Gastrocnemius medialis (tissue), 4 donors: ENCODE measurements at regions of chr22 and their contacts with region 1.

Region 1: GRCh38 chr22:24244101-24244787 is 638 bp downstream of the GGT5 start:
- DNase-seq: no peak
- ATAC-seq: no peak
- H3K4me3 ChIP-seq: peak overlapping the region; percentile 43 to 53 (median 50)
- H3K27ac ChIP-seq: peak overlapping the region; percentile 72 to 82 (median 74)
- H3K4me1 ChIP-seq: peaks cover 14 to 20% of the 10 kb centered on the region in 2 donors
- H3K27me3 ChIP-seq: no peaks in the 10 kb centered on the region
- CTCF ChIP-seq: no peak
- POLR2A ChIP-seq: no peak

Region 2: DNA sequence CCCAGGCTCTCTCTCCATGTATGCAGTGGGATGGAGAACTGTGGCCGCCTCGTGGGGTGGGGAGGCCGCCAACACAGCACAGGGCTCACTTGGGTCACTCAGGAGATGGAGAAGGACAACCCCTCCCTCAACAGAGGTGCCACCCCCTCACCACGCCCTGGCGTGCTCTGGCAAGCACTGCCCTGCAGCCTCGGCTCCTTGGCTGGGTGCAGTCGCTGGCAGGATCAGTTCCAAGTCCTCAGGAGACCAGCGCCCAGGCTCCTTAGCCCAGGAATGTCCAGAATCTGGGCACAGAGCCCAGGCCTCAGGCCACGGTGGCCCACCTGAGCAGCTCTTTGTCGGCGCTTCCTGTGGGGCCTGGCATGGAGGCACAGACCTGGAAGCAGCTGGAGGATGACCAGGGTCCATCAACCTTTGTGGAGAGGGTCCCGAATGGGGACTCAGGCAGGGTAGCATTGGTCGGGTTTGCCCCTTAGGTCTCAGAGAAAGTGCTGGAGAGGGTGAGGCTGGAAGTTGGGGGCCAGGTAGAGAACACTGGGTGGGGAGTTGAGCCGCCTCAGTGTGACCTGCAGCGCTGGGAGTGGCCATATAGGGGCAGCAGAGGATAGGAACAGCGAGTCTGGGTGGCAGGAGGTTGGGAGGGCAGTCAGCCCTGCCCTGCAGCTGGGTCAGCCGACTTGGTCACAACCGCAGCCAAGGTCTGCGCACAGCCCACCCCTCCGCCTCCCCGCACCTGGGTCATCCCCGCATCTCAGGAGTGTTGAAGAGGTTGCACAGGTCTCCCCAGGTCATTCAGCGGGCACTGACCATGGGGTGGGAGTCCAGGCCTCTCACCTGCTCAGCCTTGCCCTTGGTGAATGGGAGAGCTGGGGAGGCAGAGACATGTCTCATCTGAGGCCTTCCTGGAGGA is 54.7 kb before region 1 on chr22:
- in situ Hi-C with region 1: loop called in 2 of 4 experiments (anchors 10 kb)
- intact Hi-C with region 1: loop called (anchors 1 kb)
- DNase-seq: peak; percentile 42 to 56
- ATAC-seq: peak; percentile 84 to 91
- H3K4me3 ChIP-seq: no peak overlapping the region
- H3K27ac ChIP-seq: no peak overlapping the region
- H3K4me1 ChIP-seq: peaks cover 0 to 7% of the 10 kb centered on the region in 2 donors
- H3K27me3 ChIP-seq: no peaks in the 10 kb centered on the region
- CTCF ChIP-seq: peak; percentile 87 to 95 (median 89)
- POLR2A ChIP-seq: no peak

Region 3: GRCh38 chr22:24208012-24208749 is 36.1 kb before region 1 on chr22:
- in situ Hi-C with region 1: no loop called
- intact Hi-C with region 1: loop called (anchors 5 kb)
- DNase-seq: peak in 1 of 2 donors; percentile 66
- ATAC-seq: peak; percentile 87 to 95
- H3K4me3 ChIP-seq: peak overlapping the region in 1 of 4 donors; percentile 17
- H3K27ac ChIP-seq: peak overlapping the region; percentile 75 to 77 (median 76)
- H3K4me1 ChIP-seq: peaks cover 7 to 29% of the 10 kb centered on the region in 2 donors
- H3K27me3 ChIP-seq: no peaks in the 10 kb centered on the region
- CTCF ChIP-seq: no peak
- POLR2A ChIP-seq: no peak

Region 4: GRCh38 chr22:24516301-24516737 is 272.1 kb after region 1 on chr22:
- in situ Hi-C with region 1: no loop called
- intact Hi-C with region 1: no loop called
- DNase-seq: no peak
- ATAC-seq: no peak
- H3K4me3 ChIP-seq: no peak overlapping the region
- H3K27ac ChIP-seq: no peak overlapping the region
- H3K4me1 ChIP-seq: peaks cover 4 to 8% of the 10 kb centered on the region in 2 donors
- H3K27me3 ChIP-seq: no peaks in the 10 kb centered on the region
- CTCF ChIP-seq: no peak
- POLR2A ChIP-seq: no peak